GM12878 (cell line): ENCODE measurements at regions of chr10 and their contacts with region 1.

Region 1: GRCh38 chr10:118241229-118242137 is 100.6 kb downstream of the FAM204A start:
- DNase-seq: peak; percentile 16
- ATAC-seq: peak; percentile 63
- H3K4me3 ChIP-seq: no peak overlapping the region
- H3K27ac ChIP-seq: no peak overlapping the region
- H3K4me1 ChIP-seq: no peaks in the 10 kb centered on the region
- H3K27me3 ChIP-seq: peaks cover 0 to 3% of the 10 kb centered on the region in 2 experiments; a peak in 1 of 4 replicates
- CTCF ChIP-seq: peak; percentile 88 to 95 (median 88); a peak in 5 of 6 replicates
- EP300 ChIP-seq: no peak
- POLR2A ChIP-seq: no peak
- RAD21 ChIP-seq: peak; percentile 86

Region 2: DNA sequence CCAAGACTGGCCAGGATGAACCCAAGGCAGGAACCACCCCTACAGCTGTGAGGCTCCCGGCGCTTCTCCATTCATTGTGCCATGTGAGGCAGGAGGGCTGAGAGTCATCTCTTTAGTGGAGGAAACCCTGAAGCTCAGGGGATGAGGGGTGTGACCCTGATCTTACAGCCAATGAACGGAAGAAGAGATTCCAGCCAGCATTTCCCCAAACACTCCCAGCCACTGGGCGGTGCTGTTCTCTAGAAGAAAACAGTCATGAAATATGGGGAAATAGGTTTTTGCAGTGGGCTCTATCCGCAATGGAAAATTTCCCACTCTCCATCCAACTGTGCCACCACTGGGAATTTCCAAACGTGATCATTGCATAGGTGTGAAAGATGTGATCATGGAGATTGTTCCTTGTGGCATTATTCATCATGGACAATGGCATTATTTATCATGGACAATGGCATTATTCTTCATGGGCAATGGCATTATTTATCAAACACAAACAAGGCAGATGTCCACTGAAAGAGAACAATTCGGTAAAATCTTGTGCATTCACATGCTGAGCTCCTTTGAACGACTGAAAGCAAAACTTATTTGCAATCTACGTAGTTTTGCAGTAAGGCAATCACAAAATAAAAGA is 1014.5 kb before region 1 on chr10:
- CTCF ChIA-PET with region 1: interaction called, 6 read pairs
- POLR2A ChIA-PET with region 1: no interaction called
- RAD21 ChIA-PET with region 1: no interaction called
- SMC1A ChIA-PET with region 1: no interaction called
- in situ Hi-C with region 1: loop called (anchors 10 kb)
- intact Hi-C with region 1: no loop called
- DNase-seq: no peak
- ATAC-seq: peak; percentile 61
- H3K4me3 ChIP-seq: no peak overlapping the region
- H3K27ac ChIP-seq: no peak overlapping the region
- H3K4me1 ChIP-seq: no peaks in the 10 kb centered on the region
- H3K27me3 ChIP-seq: no peaks in the 10 kb centered on the region; a peak in 1 of 4 replicates
- CTCF ChIP-seq: peak; percentile 47 to 53 (median 47); a peak in 5 of 6 replicates
- EP300 ChIP-seq: no peak
- POLR2A ChIP-seq: no peak
- RAD21 ChIP-seq: peak; percentile 36; the same call in 1 of the 2 replicates

Region 3: GRCh38 chr10:117442944-117443685 is 798.4 kb before region 1 on chr10:
- CTCF ChIA-PET with region 1: interaction called, 12 read pairs
- POLR2A ChIA-PET with region 1: no interaction called
- RAD21 ChIA-PET with region 1: interaction called, 5 read pairs
- SMC1A ChIA-PET with region 1: interaction called, 4 read pairs
- in situ Hi-C with region 1: no loop called
- intact Hi-C with region 1: loop called (anchors 5 kb)
- DNase-seq: peak; percentile 16
- ATAC-seq: peak; percentile 90
- H3K4me3 ChIP-seq: no peak overlapping the region
- H3K27ac ChIP-seq: no peak overlapping the region
- H3K4me1 ChIP-seq: 0 out of 2 replicates have a peak, but pooled peaks cover 5% of the 10 kb centered on the region
- H3K27me3 ChIP-seq: no peaks in the 10 kb centered on the region; a peak in 1 of 4 replicates
- CTCF ChIP-seq: peak; percentile 70 to 80 (median 79)
- EP300 ChIP-seq: no peak
- POLR2A ChIP-seq: no peak
- RAD21 ChIP-seq: peak; percentile 35

Region 4: DNA sequence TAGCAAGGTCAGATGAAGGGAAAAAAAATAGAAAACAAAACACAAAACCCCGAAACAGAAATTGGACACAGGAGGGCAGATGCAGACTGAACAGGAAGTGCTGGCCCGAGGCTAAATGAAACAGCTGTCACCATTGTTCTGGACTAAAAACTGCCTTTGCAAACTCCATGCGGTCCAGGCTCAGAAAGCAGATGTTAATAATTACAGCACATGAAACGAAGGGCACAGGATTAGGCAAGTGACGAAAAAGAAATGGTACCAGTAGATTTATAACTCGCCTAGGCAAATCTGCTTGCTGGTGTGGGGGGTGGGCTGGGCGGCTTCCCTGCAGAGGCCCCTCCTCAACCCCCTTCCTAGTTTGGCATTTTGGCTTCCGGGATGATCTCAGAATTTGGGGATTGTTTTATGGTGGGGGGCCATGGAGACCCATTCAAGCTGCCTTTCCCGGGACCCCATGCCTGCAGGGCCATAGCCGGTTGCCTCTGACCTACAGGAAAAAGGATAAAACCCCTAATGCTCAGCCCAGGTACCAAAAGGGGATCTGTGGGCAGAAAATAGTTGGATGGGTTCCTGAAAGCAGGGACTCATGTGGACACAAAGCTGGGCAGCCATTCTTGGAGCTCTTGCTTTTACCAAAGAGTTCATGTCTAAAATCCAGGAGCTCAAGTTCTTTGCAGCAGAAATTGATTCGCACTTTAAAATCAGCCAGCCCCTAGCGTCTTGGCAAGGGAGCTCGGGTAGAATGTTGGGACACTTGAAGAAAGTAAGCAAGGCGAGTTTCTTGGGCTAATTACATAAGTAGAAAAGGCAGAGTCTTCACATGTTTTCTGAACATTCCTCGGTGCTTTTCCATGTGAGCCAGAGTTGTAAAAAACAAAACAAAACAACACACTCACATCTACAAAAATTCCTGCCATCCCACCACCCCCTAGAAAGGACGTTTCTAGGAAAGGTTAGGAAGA is 738.0 kb before region 1 on chr10:
- CTCF ChIA-PET with region 1: interaction called, 99 read pairs
- POLR2A ChIA-PET with region 1: no interaction called
- RAD21 ChIA-PET with region 1: interaction called, 71 read pairs
- SMC1A ChIA-PET with region 1: interaction called, 67 read pairs
- in situ Hi-C with region 1: no loop called
- intact Hi-C with region 1: no loop called
- DNase-seq: no peak
- ATAC-seq: peak; percentile 92
- H3K4me3 ChIP-seq: no peak overlapping the region
- H3K27ac ChIP-seq: no peak overlapping the region
- H3K4me1 ChIP-seq: no peaks in the 10 kb centered on the region
- H3K27me3 ChIP-seq: peaks cover 2 to 3% of the 10 kb centered on the region in 2 experiments; a peak in 1 of 4 replicates
- CTCF ChIP-seq: peak in 1 of 3 experiments; percentile 28; a peak in 1 of 6 replicates
- EP300 ChIP-seq: no peak
- POLR2A ChIP-seq: no peak
- RAD21 ChIP-seq: no peak

Region 5: GRCh38 chr10:117860823-117861222 is 380.7 kb before region 1 on chr10:
- CTCF ChIA-PET with region 1: interaction called, 3 read pairs
- POLR2A ChIA-PET with region 1: no interaction called
- RAD21 ChIA-PET with region 1: no interaction called
- SMC1A ChIA-PET with region 1: no interaction called
- in situ Hi-C with region 1: no loop called
- intact Hi-C with region 1: loop called (anchors 2 kb)
- DNase-seq: no peak
- ATAC-seq: peak; percentile 68
- H3K4me3 ChIP-seq: no peak overlapping the region
- H3K27ac ChIP-seq: no peak overlapping the region
- H3K4me1 ChIP-seq: no peaks in the 10 kb centered on the region
- H3K27me3 ChIP-seq: no peaks in the 10 kb centered on the region
- CTCF ChIP-seq: peak; percentile 27 to 59 (median 44); a peak in 4 of 6 replicates
- EP300 ChIP-seq: no peak
- POLR2A ChIP-seq: no peak
- RAD21 ChIP-seq: peak; percentile 39

Region 6: GRCh38 chr10:118259288-118259906 is 17.9 kb after region 1 on chr10:
- CTCF ChIA-PET with region 1: interaction called, 25 read pairs
- POLR2A ChIA-PET with region 1: no interaction called
- RAD21 ChIA-PET with region 1: interaction called, 4 read pairs
- SMC1A ChIA-PET with region 1: no interaction called
- in situ Hi-C with region 1: no loop called
- intact Hi-C with region 1: no loop called
- DNase-seq: no peak
- ATAC-seq: peak; percentile 79
- H3K4me3 ChIP-seq: no peak overlapping the region
- H3K27ac ChIP-seq: no peak overlapping the region
- H3K4me1 ChIP-seq: no peaks in the 10 kb centered on the region
- H3K27me3 ChIP-seq: peaks cover 0 to 1% of the 10 kb centered on the region in 2 experiments; a peak in 2 of 4 replicates
- CTCF ChIP-seq: peak; percentile 60 to 65 (median 62)
- EP300 ChIP-seq: no peak
- POLR2A ChIP-seq: no peak
- RAD21 ChIP-seq: peak; percentile 32

Region 7: GRCh38 chr10:118383699-118384098 is 142.2 kb after region 1 on chr10:
- CTCF ChIA-PET with region 1: no interaction called
- POLR2A ChIA-PET with region 1: no interaction called
- RAD21 ChIA-PET with region 1: no interaction called
- SMC1A ChIA-PET with region 1: no interaction called
- in situ Hi-C with region 1: no loop called
- intact Hi-C with region 1: no loop called
- DNase-seq: no peak
- ATAC-seq: no peak
- H3K4me3 ChIP-seq: no peak overlapping the region
- H3K27ac ChIP-seq: no peak overlapping the region
- H3K4me1 ChIP-seq: no peaks in the 10 kb centered on the region
- H3K27me3 ChIP-seq: no peaks in the 10 kb centered on the region
- CTCF ChIP-seq: no peak
- EP300 ChIP-seq: no peak
- POLR2A ChIP-seq: no peak
- RAD21 ChIP-seq: no peak

Region 8: DNA sequence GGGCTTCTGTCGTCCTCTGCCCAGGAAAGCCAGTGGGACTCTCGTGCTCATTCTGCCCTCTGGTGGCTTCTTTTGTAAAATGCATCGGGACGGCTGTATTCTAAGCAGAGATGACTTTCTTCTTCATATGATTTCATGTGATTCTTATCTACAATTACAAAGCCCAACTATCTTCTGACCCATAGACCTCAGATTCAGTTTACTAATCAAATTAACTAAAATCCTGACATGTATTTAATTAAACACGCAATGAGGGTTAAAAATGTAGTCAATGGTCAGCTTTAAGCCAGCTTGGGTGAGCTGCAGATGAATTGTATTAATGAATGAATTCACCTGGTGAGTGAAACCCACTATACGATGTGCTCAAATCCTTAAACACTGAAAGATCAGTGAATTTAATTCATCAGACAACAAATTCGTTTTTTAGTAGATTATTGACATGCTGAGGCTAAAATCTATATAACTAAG is 218.3 kb after region 1 on chr10:
- CTCF ChIA-PET with region 1: interaction called, 15 read pairs
- POLR2A ChIA-PET with region 1: no interaction called
- RAD21 ChIA-PET with region 1: no interaction called
- SMC1A ChIA-PET with region 1: interaction called, 4 read pairs
- in situ Hi-C with region 1: no loop called
- intact Hi-C with region 1: no loop called
- DNase-seq: no peak
- ATAC-seq: peak; percentile 94
- H3K4me3 ChIP-seq: no peak overlapping the region
- H3K27ac ChIP-seq: no peak overlapping the region
- H3K4me1 ChIP-seq: no peaks in the 10 kb centered on the region
- H3K27me3 ChIP-seq: peaks cover 0 to 3% of the 10 kb centered on the region in 2 experiments; a peak in 3 of 4 replicates
- CTCF ChIP-seq: peak; percentile 65 to 81 (median 75)
- EP300 ChIP-seq: no peak
- POLR2A ChIP-seq: no peak
- RAD21 ChIP-seq: peak; percentile 65